ENCODE measurements at regions of chr13 and their contacts with region 1.

Region 1: DNA sequence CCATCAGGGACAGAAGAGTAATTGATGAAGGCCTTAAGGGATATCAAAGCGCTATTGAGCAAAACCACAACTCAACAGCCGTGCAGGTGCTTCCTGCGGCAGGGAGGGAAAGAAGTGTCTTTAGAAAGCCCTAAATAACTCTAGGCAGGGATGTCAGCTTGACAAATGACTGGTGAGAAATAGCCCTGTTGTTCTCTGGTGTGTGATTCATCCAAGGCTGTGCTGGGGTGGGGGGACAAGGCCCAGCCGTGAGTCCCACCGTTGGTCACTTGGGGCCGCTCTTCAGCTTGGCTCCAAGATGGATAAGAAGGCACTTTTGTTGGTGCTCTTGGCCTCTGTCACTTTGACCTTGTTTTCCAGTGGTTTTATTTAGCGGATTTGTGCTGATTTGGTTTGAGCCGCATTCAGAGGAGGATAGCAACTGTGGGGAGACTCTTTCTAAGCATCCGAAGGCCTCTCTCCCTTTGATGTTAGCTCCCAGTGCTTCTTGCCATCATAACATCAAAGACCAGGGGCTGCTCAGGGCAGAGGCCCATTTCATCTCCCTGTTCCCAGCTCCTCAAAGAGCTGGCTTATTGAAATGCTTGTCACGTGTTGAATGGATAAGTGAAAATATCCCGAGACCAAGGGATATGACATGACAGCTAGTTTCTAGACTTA is 130.3 kb upstream of the SERP2 start:
- DNase-seq: peak; percentile 94 to 99 (median 98)
- H3K4me3 ChIP-seq: no peak overlapping the region
- H3K27ac ChIP-seq: peak overlapping the region in 1 of 2 experiments; percentile 40
- H3K4me1 ChIP-seq: peaks cover 4 to 59% (median 42%) of the 10 kb centered on the region in 4 experiments
- H3K27me3 ChIP-seq: no peaks in the 10 kb centered on the region

Region 2: GRCh38 chr13:43905435-43906031 is 337.8 kb before region 1 on chr13:
- CTCF ChIA-PET with region 1: interaction called, 13 read pairs
- POLR2A ChIA-PET with region 1: no interaction called
- DNase-seq: peak; percentile 65 to 81 (median 78)
- H3K4me3 ChIP-seq: no peak overlapping the region
- H3K27ac ChIP-seq: no peak overlapping the region
- H3K4me1 ChIP-seq: no peaks in the 10 kb centered on the region
- H3K27me3 ChIP-seq: no peaks in the 10 kb centered on the region

Region 3: GRCh38 chr13:44274452-44275205 is 31.3 kb after region 1 on chr13:
- CTCF ChIA-PET with region 1: interaction called, 11 read pairs
- POLR2A ChIA-PET with region 1: no interaction called
- DNase-seq: peak; percentile 85 to 93 (median 90)
- H3K4me3 ChIP-seq: peak overlapping the region in 5 of 7 experiments; percentile 21 to 64 (median 52)
- H3K27ac ChIP-seq: peak overlapping the region; percentile 59 to 76
- H3K4me1 ChIP-seq: peaks cover 11 to 48% (median 34%) of the 10 kb centered on the region in 4 experiments
- H3K27me3 ChIP-seq: no peaks in the 10 kb centered on the region

Region 4: DNA sequence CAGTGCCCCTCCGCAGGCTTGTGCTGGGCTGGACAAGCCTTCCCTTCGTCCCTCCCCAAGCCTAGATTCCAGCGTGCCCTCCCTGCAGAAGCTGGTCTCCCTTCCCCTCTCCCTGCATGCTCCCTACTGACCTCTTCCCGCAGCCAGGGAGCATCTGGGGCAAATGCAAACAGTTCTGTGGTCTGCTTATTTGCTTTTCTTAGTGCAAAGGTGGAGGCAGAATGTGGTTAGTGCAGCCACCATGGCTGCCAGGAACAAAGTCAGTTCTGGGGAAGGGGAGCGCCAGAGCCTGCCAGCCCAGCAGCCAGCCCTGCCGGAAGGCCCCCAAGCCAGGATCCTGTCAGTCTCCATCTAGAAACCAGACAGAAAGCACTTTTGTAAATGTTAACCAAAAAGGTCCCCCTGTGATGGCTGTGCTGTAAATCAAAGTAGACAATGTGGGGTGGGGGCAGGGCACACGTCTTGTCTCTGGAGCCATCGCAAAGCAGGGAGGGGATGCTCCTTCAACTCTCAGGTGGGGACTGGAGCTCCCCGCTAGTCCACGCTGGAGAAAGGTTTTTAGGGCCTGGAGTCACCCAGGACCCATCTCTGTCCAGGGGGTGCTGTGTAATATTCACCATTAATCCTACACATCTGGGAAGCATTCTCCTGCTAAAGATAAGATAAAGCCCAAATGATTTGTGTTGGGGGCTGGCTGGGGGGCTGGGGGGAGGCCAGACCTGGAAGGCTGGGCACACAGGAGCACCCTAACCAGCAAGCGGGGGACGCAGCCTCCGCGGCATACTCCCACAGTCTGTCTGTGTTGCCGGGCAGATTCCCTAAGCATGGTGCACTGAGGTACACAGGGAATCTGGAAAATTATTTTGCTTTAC is 161.2 kb after region 1 on chr13:
- CTCF ChIA-PET with region 1: interaction called, 18 read pairs
- POLR2A ChIA-PET with region 1: no interaction called
- DNase-seq: no peak
- H3K4me3 ChIP-seq: peak overlapping the region in 1 of 7 experiments; percentile 4
- H3K27ac ChIP-seq: no peak overlapping the region
- H3K4me1 ChIP-seq: peaks cover 0 to 77% (median 34%) of the 10 kb centered on the region in 4 experiments
- H3K27me3 ChIP-seq: no peaks in the 10 kb centered on the region

Region 5: DNA sequence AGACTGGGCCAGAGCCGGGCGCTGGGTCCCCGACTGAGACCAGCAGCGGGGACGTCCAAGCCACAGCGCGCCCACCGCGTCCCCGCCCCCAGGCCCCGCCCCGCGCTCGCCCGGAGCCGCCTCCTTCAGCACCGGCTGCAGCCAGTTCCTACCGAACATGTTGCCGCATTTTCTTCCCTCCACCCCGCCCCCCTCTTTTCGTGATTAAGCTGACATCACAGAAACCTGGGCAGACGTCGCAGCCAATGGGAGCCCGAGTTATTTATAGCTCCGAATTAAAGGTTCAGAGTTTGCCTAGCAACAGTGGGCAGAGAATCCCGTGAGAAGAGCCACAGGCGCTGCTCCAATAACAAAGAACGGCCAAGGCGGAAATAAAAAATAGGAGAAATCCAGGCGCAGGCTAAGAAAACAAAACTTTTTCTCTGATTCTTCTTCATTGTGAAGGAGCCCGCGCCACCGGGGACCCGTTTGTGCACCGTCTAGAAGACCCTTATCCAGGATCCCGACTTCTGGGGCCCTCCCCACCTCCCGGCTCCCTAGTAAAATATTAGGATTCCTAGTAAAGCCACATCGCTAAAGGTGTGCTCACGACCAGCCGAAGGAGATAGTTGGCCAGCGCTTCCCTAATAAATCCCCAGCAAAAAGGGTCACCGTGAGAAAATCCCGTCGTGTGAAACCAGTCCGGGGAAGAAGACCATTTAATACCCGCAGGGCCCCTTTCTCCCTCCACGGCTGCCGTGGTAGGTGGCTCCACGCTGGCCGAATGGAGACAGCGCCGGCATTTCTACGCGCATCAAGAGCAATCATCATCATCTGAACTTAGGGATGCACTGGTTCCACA is 192.0 kb after region 1 on chr13:
- CTCF ChIA-PET with region 1: interaction called, 220 read pairs
- POLR2A ChIA-PET with region 1: interaction called, 57 read pairs
- DNase-seq: peak; percentile 99 to 100 (median 99)
- H3K4me3 ChIP-seq: peak overlapping the region; percentile 79 to 100 (median 87)
- H3K27ac ChIP-seq: peak overlapping the region; percentile 99
- H3K4me1 ChIP-seq: peaks cover 37 to 53% (median 43%) of the 10 kb centered on the region in 4 experiments
- H3K27me3 ChIP-seq: no peaks in the 10 kb centered on the region

Region 6: DNA sequence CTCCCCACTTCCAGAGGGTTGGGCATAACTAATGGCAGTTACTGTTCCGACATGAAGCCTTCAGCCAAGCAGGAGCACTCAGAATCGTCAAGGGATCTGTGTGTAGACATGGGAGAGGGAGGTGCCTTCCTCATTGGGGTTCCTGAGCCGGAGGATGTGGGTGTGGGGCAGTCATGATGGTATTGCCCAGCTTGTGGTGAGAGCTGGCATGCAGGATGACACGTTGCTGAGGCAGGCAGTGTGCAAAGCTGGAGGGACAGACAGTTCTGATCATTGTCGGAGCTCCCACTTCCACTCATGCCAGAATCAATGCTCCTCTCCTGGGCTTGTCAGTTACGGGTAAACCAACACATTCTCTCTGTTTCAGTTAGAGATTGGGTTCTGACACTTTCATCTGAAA is 416.7 kb after region 1 on chr13:
- CTCF ChIA-PET with region 1: no interaction called
- POLR2A ChIA-PET with region 1: no interaction called
- DNase-seq: no peak
- H3K4me3 ChIP-seq: no peak overlapping the region
- H3K27ac ChIP-seq: no peak overlapping the region
- H3K4me1 ChIP-seq: no peaks in the 10 kb centered on the region
- H3K27me3 ChIP-seq: no peaks in the 10 kb centered on the region